ENCODE measurements at regions of chr11 and their contacts with region 1.

Region 1: GRCh38 chr11:93921695-93922468 is 71.5 kb upstream of the VSTM5 start:
- DNase-seq: peak; percentile 43 to 71
- H3K4me3 ChIP-seq: no peak overlapping the region
- H3K27ac ChIP-seq: no peak overlapping the region
- H3K4me1 ChIP-seq: no peaks in the 10 kb centered on the region
- H3K27me3 ChIP-seq: no peaks in the 10 kb centered on the region
- CTCF ChIP-seq: peak; percentile 57 to 92 (median 81)
- EP300 ChIP-seq: no peak
- POLR2A ChIP-seq: no peak
- RAD21 ChIP-seq: peak; percentile 93

Region 2: GRCh38 chr11:93908689-93909088 is 13.2 kb before region 1 on chr11:
- CTCF ChIA-PET with region 1: interaction called, 18 read pairs
- POLR2A ChIA-PET with region 1: interaction called, 3 read pairs
- DNase-seq: no peak
- H3K4me3 ChIP-seq: no peak overlapping the region
- H3K27ac ChIP-seq: no peak overlapping the region
- H3K4me1 ChIP-seq: peaks cover 0 to 4% (median 2%) of the 10 kb centered on the region in 4 experiments; a peak in 2 of 7 replicates
- H3K27me3 ChIP-seq: no peaks in the 10 kb centered on the region
- CTCF ChIP-seq: no peak
- EP300 ChIP-seq: no peak
- POLR2A ChIP-seq: no peak
- RAD21 ChIP-seq: no peak

Region 3: DNA sequence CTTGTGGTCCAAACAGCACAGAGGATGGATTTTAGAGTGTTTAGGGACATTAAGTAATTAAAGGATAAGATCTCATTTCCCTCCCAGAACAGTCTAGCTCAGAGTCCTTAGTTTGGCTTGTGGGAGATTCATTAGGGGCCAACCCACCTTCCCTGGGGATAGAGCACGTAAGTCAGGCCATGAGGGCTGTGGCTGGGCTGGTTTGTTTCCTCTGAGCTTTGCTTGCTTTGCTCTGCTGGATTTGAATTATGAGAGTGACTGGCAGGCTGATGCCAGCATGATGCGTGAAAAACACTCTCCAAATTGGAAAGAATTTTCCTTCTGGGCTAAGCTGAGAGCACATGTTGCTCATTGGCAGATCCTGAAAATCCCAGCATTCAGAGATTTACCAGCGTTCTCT is 14.6 kb after region 1 on chr11:
- CTCF ChIA-PET with region 1: interaction called, 19 read pairs
- POLR2A ChIA-PET with region 1: interaction called, 3 read pairs
- DNase-seq: no peak
- H3K4me3 ChIP-seq: no peak overlapping the region
- H3K27ac ChIP-seq: no peak overlapping the region
- H3K4me1 ChIP-seq: no peaks in the 10 kb centered on the region
- H3K27me3 ChIP-seq: no peaks in the 10 kb centered on the region
- CTCF ChIP-seq: no peak
- EP300 ChIP-seq: no peak
- POLR2A ChIP-seq: no peak
- RAD21 ChIP-seq: no peak

Region 4: DNA sequence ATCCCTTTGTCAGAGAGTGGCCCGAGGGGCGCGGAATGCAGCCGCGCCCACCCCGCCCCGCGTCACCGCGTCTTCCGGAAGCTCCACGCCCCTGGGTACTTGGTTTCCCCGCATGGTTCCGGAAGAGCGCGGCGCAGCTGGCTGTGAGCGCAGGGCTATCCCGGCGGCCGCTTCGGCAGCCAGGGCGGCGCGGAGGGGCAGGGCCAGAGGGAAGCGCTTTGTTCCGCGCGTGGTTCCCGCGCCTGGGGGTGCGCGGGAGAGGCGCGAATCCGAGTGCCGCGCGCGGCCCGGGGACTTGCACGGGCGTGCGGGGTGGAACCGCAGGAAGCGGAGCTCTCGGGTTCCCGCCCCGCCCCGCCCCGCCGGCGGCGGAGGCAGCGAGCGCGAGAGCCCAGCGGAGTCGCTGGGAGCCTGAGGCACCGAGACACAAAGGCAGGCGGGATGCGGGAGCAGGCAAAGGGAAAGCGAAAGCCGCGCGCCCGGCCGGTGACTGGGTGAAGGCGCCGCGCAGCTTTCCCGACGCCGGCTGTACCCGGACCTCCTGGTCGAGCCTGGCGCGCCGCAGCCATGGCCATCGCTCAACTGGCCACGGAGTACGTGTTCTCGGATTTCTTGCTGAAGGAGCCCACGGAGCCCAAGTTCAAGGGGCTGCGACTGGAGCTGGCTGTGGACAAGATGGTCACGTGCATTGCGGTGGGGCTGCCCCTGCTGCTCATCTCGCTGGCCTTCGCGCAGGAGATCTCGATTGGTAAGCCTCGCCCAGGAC is 207.0 kb after region 1 on chr11 and contains the start of gene PANX1:
- CTCF ChIA-PET with region 1: interaction called, 12 read pairs
- POLR2A ChIA-PET with region 1: interaction called, 4 read pairs
- DNase-seq: peak in 1 of 2 experiments; percentile 85
- H3K4me3 ChIP-seq: peak within 1 kb of the TSS; percentile 77 to 96 (median 86)
- H3K27ac ChIP-seq: peak within 1 kb of the TSS; percentile 90
- H3K4me1 ChIP-seq: peaks cover 12 to 34% (median 19%) of the 10 kb centered on the region in 4 experiments
- H3K27me3 ChIP-seq: no peaks in the 10 kb centered on the region
- CTCF ChIP-seq: no peak
- EP300 ChIP-seq: peak in 1 of 2 experiments; percentile 40; a peak in 1 of 3 replicates
- POLR2A ChIP-seq: peak; percentile 66 to 68; a peak in 2 of 3 replicates
- RAD21 ChIP-seq: no peak
- total RNA-seq, gene PANX1: 34.5 and 35.2 TPM in 2 replicates

Region 5: DNA sequence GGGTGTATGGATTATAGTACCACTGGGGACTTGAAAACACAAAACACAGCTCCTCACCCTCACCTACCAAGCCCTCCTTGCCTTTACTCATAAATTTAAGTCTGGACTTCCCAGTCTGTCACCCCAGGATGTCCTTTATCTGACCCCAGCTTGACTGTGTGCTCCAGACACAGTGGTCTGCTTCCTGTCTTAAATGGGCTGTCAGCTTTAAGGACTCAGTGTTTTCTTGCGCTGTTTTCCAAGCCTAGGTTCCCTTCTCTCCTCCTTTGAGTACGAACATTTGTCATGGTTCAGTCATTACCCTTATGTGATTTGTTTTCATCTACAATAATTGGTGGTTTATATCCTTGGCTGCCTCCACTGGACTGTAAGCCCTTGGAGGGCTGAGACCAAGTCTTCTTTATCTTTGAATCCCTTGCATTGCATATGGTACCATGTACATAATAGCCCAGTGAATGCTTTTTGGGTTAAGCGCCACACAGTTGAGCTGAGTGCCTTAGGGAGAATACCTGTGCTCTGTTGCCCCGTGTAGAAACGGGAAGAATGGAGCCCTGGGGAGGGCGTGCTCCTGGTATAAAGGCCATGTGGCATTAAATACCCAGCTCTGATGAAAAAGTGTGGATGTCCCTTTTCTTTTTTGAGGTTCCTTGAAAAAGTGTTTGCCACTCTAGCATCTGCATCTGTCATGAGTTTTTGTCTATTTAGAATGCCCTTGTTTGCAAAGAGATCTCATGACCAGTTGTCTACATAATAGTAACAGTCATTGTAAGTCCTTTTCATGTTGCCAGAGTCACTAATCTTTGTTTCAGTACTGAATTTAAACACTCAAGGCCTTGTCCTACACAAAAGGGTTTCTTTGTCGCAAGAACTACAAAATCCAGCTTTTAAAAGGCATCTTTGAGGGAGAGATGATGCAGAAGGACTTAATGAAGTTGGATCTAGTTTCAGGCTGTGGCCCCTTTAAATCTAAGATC is 220.7 kb after region 1 on chr11:
- CTCF ChIA-PET with region 1: interaction called, 10 read pairs
- POLR2A ChIA-PET with region 1: no interaction called
- DNase-seq: no peak
- H3K4me3 ChIP-seq: no peak overlapping the region
- H3K27ac ChIP-seq: no peak overlapping the region
- H3K4me1 ChIP-seq: peaks cover 5 to 30% (median 23%) of the 10 kb centered on the region in 4 experiments
- H3K27me3 ChIP-seq: no peaks in the 10 kb centered on the region
- CTCF ChIP-seq: no peak
- EP300 ChIP-seq: no peak
- POLR2A ChIP-seq: no peak
- RAD21 ChIP-seq: no peak

Region 6: GRCh38 chr11:94171693-94172440 is 250.0 kb after region 1 on chr11:
- CTCF ChIA-PET with region 1: interaction called, 18 read pairs
- POLR2A ChIA-PET with region 1: no interaction called
- DNase-seq: peak; percentile 36 to 83
- H3K4me3 ChIP-seq: no peak overlapping the region
- H3K27ac ChIP-seq: no peak overlapping the region
- H3K4me1 ChIP-seq: peaks cover 3 to 14% (median 5%) of the 10 kb centered on the region in 4 experiments; a peak in 4 of 7 replicates
- H3K27me3 ChIP-seq: no peaks in the 10 kb centered on the region
- CTCF ChIP-seq: peak; percentile 67 to 79 (median 78)
- EP300 ChIP-seq: no peak
- POLR2A ChIP-seq: no peak
- RAD21 ChIP-seq: peak; percentile 74 to 80

Measured in H1 (cell line).